B cell (primary cell): ENCODE measurements at regions of chr19 and their contacts with region 1.

Region 1: DNA sequence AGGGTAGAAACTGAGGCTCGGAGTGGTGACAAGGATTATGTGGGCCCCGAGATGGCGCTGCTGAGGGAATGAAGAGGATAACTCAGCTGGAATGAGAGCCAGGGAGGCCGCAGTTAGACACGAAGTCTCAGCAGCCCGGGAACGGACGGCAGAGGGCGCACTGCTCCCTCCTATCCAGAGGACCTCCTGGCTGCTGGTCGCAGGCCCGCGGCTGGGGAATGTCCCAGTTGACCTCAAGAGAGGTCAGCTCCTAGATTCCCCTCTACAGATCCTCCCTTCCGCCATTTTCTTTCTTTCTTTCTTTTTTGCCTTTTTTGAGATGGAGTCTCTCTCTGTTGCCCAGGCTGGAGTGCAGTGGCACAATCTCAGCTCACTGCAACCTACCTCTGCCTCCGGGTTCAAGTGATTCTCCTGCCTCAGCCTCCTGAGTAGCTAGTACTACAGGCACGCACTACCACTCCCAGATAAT is 24.1 kb upstream of the ASPDH start:
- DNase-seq: peak; percentile 66
- ATAC-seq: peak; percentile 36
- H3K4me3 ChIP-seq: no peak overlapping the region
- H3K4me3 Mint-ChIP-seq: no peak overlapping the region
- H3K27ac ChIP-seq: no peak overlapping the region
- H3K27ac Mint-ChIP-seq: no peak overlapping the region
- H3K4me1 ChIP-seq: no peaks in the 10 kb centered on the region
- H3K4me1 Mint-ChIP-seq: no peaks in the 10 kb centered on the region
- H3K27me3 ChIP-seq: peaks cover 0 to 8% (median 0%) of the 10 kb centered on the region in 4 experiments
- H3K27me3 Mint-ChIP-seq: peaks cover 13% of the 10 kb centered on the region
- CTCF ChIP-seq: peak; percentile 74

Region 2: DNA sequence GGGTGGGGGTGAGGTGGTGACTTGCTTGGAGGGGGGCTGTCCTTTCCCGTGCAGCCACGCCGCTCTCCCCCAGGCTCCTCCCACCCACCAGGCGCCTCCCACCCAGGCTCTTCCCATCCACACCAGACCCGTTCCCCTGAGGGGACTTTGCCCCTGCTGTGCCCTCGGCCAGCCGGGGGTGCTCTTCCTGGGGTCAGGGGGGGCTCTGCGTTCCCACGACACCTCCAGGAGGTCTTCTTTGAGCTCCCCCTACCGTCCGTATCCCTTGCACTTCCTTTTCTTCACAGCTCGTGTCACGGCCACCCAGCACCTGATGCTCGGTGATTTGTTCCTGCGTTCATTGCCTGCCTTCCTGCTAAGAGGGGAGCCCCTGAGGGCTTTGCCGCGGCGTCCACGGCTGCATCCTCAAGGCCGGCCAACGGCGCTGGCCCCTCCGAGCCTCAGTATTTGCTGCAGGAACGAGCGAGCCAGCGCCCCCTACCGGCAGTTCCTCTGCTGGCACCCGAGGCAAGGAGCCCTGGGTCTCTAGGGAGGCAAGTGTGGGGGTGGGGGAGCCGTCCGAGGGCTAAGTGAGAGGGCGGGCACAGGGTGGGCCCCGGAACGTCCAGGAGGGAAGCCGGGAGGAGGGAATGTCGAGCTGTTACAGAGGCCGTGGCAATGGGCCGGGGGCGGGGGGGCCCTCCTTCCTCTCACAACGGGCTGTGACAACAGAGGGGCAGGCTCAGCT is 18.6 kb after region 1 on chr19:
- CTCF ChIA-PET with region 1: interaction called, 14 read pairs
- POLR2A ChIA-PET with region 1: no interaction called
- intact Hi-C with region 1: no loop called
- DNase-seq: peak; percentile 81
- ATAC-seq: peak; percentile 59
- H3K4me3 ChIP-seq: peak overlapping the region in 4 of 5 experiments; percentile 35 to 55 (median 54)
- H3K4me3 Mint-ChIP-seq: peak overlapping the region; percentile 88
- H3K27ac ChIP-seq: no peak overlapping the region
- H3K27ac Mint-ChIP-seq: no peak overlapping the region
- H3K4me1 ChIP-seq: peaks cover 13 to 14% of the 10 kb centered on the region in 2 donors
- H3K4me1 Mint-ChIP-seq: peaks cover 5% of the 10 kb centered on the region
- H3K27me3 ChIP-seq: peaks cover 0 to 63% (median 13%) of the 10 kb centered on the region in 4 experiments
- H3K27me3 Mint-ChIP-seq: peaks cover 55% of the 10 kb centered on the region
- CTCF ChIP-seq: peak; percentile 83

Region 3: GRCh38 chr19:50785329-50785728 is 247.5 kb after region 1 on chr19:
- CTCF ChIA-PET with region 1: interaction called, 15 read pairs
- POLR2A ChIA-PET with region 1: no interaction called
- intact Hi-C with region 1: loop called (anchors 1 kb)
- DNase-seq: no peak
- ATAC-seq: no peak
- H3K4me3 ChIP-seq: no peak overlapping the region
- H3K4me3 Mint-ChIP-seq: no peak overlapping the region
- H3K27ac ChIP-seq: no peak overlapping the region
- H3K27ac Mint-ChIP-seq: no peak overlapping the region
- H3K4me1 ChIP-seq: peaks cover 0 to 6% of the 10 kb centered on the region in 2 donors
- H3K4me1 Mint-ChIP-seq: peaks cover 3% of the 10 kb centered on the region
- H3K27me3 ChIP-seq: peaks cover 0 to 19% (median 3%) of the 10 kb centered on the region in 4 experiments
- H3K27me3 Mint-ChIP-seq: peaks cover 16% of the 10 kb centered on the region
- CTCF ChIP-seq: no peak